ENCODE measurements at regions of chr21 and their contacts with region 1.

Region 1: GRCh38 chr21:37642493-37642892 is 273.8 kb downstream of the KCNJ6 start:
- DNase-seq: peak in 6 of 9 experiments; percentile 3 to 56 (median 31)
- ATAC-seq: peak; percentile 49
- H3K4me3 ChIP-seq: no peak overlapping the region
- H3K4me3 Mint-ChIP-seq: no peak overlapping the region
- H3K27ac ChIP-seq: no peak overlapping the region
- H3K27ac Mint-ChIP-seq: no peak overlapping the region
- H3K4me1 ChIP-seq: no peaks in the 10 kb centered on the region
- H3K4me1 Mint-ChIP-seq: no peaks in the 10 kb centered on the region
- H3K27me3 ChIP-seq: no peaks in the 10 kb centered on the region
- H3K27me3 Mint-ChIP-seq: peaks cover 47% of the 10 kb centered on the region
- CTCF ChIP-seq: peak; percentile 22

Region 2: GRCh38 chr21:37166733-37167132 is 475.8 kb before region 1 on chr21:
- CTCF ChIA-PET with region 1: no interaction called
- POLR2A ChIA-PET with region 1: no interaction called
- intact Hi-C with region 1: loop called in 1 of 2 experiments (anchors 5 kb)
- DNase-seq: peak in 2 of 9 experiments; percentile 22 to 38
- ATAC-seq: no peak
- H3K4me3 ChIP-seq: no peak overlapping the region
- H3K4me3 Mint-ChIP-seq: no peak overlapping the region
- H3K27ac ChIP-seq: no peak overlapping the region
- H3K27ac Mint-ChIP-seq: no peak overlapping the region
- H3K4me1 ChIP-seq: no peaks in the 10 kb centered on the region
- H3K4me1 Mint-ChIP-seq: no peaks in the 10 kb centered on the region
- H3K27me3 ChIP-seq: no peaks in the 10 kb centered on the region
- H3K27me3 Mint-ChIP-seq: no peaks in the 10 kb centered on the region
- CTCF ChIP-seq: no peak

Region 3: GRCh38 chr21:37496972-37497371 is 145.5 kb before region 1 on chr21:
- CTCF ChIA-PET with region 1: no interaction called
- POLR2A ChIA-PET with region 1: no interaction called
- intact Hi-C with region 1: loop called in 1 of 2 experiments (anchors 2 kb)
- DNase-seq: peak in 2 of 9 experiments; percentile 16 to 38
- ATAC-seq: no peak
- H3K4me3 ChIP-seq: no peak overlapping the region
- H3K4me3 Mint-ChIP-seq: no peak overlapping the region
- H3K27ac ChIP-seq: no peak overlapping the region
- H3K27ac Mint-ChIP-seq: peak overlapping the region; percentile 5
- H3K4me1 ChIP-seq: no peaks in the 10 kb centered on the region
- H3K4me1 Mint-ChIP-seq: peaks cover 27% of the 10 kb centered on the region
- H3K27me3 ChIP-seq: no peaks in the 10 kb centered on the region
- H3K27me3 Mint-ChIP-seq: no peaks in the 10 kb centered on the region
- CTCF ChIP-seq: no peak

Region 4: DNA sequence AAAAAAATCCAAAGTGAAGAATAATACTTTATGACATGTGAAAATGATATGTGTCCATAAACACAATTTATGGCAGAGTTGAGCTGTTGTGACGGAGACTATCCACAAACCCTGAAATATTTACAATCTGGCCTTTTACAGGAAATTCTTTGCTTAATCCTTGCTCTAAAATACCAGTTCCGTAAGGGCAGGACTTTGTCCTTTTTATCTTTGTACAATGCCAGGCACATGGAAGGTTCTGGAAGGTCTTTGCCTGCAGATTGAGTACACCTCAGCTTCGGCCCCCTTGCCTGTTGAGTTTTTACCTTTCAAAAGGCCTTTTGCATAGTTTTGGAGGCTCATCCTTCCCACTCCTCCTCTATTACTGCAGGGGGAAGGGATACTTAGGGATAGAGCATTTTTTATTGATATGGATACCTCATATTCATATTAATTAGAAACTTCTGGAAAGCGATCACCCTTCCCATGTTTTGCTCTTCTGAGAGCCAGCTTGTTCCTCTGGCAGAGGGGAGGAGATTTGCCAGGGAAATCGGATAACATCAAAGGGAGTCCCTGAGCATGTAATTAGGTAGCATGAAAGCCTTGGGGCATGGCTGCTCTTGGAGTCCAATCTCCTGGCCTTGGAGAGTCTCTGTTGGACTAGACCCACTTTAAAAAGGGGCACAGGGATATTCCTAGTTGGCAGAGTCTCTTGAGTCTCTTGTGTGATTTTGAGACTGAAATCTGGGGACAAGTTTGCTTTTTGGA is 56.7 kb after region 1 on chr21:
- CTCF ChIA-PET with region 1: no interaction called
- POLR2A ChIA-PET with region 1: no interaction called
- intact Hi-C with region 1: no loop called
- DNase-seq: no peak
- ATAC-seq: no peak
- H3K4me3 ChIP-seq: no peak overlapping the region
- H3K4me3 Mint-ChIP-seq: no peak overlapping the region
- H3K27ac ChIP-seq: no peak overlapping the region
- H3K27ac Mint-ChIP-seq: no peak overlapping the region
- H3K4me1 ChIP-seq: no peaks in the 10 kb centered on the region
- H3K4me1 Mint-ChIP-seq: no peaks in the 10 kb centered on the region
- H3K27me3 ChIP-seq: peaks cover 0 to 4% of the 10 kb centered on the region in 2 experiments
- H3K27me3 Mint-ChIP-seq: peaks cover 18% of the 10 kb centered on the region
- CTCF ChIP-seq: no peak

Measured in CD8-positive, alpha-beta T cell (primary cell).